Upper lobe of right lung (tissue), 1 donor: ENCODE measurements at regions of chr3 and their contacts with region 1.

Region 1: DNA sequence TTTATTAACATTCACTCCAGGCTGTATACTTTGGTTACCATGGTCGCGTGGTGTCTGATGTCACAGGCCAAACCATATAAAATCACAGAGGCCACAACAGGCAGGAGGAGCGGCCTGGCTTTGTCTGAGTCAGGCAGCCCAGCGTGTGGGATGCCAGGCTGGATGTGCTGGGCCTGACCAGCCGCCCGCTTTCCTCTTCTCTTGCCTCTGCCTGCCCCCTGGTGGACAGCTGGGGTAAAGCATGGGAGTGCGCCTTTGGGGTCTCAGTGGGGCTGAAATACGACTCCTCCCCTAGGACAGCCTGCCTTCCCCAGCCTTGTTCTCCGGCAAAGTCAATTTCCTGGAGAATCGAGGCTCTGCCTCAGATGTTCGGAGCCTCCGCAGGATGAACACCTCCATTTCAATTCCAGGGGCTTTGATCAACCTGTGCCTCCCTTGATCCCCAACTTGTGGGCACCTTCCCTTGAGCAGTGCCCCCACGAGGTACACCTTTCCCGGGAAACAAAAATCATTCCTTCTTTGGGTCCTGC is 78.2 kb downstream of the CCNL1 start:
- DNase-seq: peak; percentile 92
- ATAC-seq: peak; percentile 99
- H3K4me3 ChIP-seq: no peak overlapping the region
- H3K27ac ChIP-seq: no peak overlapping the region
- H3K4me1 ChIP-seq: peaks cover 8% of the 10 kb centered on the region
- H3K27me3 ChIP-seq: no peaks in the 10 kb centered on the region
- CTCF ChIP-seq: peak; percentile 97

Region 2: GRCh38 chr3:156554842-156555687 is 526.7 kb before region 1 on chr3 and contains the start of gene SSR3:
- intact Hi-C with region 1: loop called (anchors 10 kb)
- DNase-seq: peak; percentile 100
- ATAC-seq: peak; percentile 100
- H3K4me3 ChIP-seq: peak within 1 kb of the TSS; percentile 91
- H3K27ac ChIP-seq: peak within 1 kb of the TSS; percentile 93
- H3K4me1 ChIP-seq: peaks cover 32% of the 10 kb centered on the region
- H3K27me3 ChIP-seq: no peaks in the 10 kb centered on the region
- CTCF ChIP-seq: peak; percentile 29
- total RNA-seq, gene SSR3: 178 TPM

Region 3: GRCh38 chr3:156674046-156674910 is 407.5 kb before region 1 on chr3 and contains the start of gene TIPARP:
- intact Hi-C with region 1: loop called (anchors 10 kb)
- DNase-seq: peak; percentile 100
- ATAC-seq: peak; percentile 96
- H3K4me3 ChIP-seq: peak within 1 kb of the TSS; percentile 88
- H3K27ac ChIP-seq: peak within 1 kb of the TSS; percentile 96
- H3K4me1 ChIP-seq: peaks cover 38% of the 10 kb centered on the region
- H3K27me3 ChIP-seq: no peaks in the 10 kb centered on the region
- CTCF ChIP-seq: peak; percentile 71
- total RNA-seq, gene TIPARP: 56.9 TPM

Region 4: GRCh38 chr3:157029365-157029790 is 52.4 kb before region 1 on chr3:
- intact Hi-C with region 1: no loop called
- DNase-seq: no peak
- ATAC-seq: peak; percentile 48
- H3K4me3 ChIP-seq: no peak overlapping the region
- H3K27ac ChIP-seq: no peak overlapping the region
- H3K4me1 ChIP-seq: no peaks in the 10 kb centered on the region
- H3K27me3 ChIP-seq: no peaks in the 10 kb centered on the region
- CTCF ChIP-seq: no peak

Region 5: DNA sequence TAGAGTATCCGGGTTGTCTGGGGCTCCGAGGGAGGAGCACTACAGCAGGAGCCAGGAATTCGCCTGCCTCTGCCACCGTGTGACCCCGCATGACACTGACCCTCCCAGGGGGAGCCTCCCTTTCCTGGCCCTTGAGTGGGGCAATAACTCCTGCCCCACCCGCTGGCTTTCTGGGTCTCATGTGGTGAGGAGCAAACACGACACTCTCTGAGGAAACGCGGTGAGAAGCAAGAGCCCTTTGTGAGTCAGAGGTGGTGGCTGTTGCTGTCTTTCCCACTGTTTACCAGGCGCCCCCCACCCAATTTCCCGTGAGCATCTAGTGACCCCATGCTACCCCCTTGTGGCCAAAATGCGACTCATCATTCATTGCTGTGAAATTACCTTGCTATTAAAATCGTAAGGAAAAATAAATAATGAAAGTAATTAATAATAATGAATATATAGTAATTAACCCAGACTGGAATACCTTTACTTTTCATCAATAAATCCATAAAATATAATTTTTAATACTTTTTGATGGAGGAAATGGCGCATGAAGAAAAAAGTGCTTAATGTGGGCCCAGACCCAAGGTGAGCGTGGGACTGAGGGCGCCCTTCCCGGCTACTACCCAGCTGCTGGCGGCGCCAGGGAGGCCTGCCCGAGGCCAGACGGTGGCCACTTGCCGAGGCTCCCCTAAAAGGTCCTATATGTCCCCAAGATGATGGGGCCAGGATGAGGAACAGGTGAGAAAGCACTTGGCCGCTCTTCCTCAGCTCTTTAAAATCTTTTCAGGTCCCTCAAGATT is 48.9 kb after region 1 on chr3:
- intact Hi-C with region 1: loop called (anchors 10 kb)
- DNase-seq: peak; percentile 84
- ATAC-seq: peak; percentile 72
- H3K4me3 ChIP-seq: no peak overlapping the region
- H3K27ac ChIP-seq: peak overlapping the region; percentile 82
- H3K4me1 ChIP-seq: peaks cover 49% of the 10 kb centered on the region
- H3K27me3 ChIP-seq: no peaks in the 10 kb centered on the region
- CTCF ChIP-seq: peak; percentile 65